GM12878 (cell line): ENCODE measurements at regions of chr3 and their contacts with region 1.

Region 1: GRCh38 chr3:179071550-179072397 is at the start of gene ZMAT3:
- DNase-seq: no peak
- ATAC-seq: peak; percentile 73
- H3K4me3 ChIP-seq: peak within 1 kb of the TSS; percentile 70
- H3K27ac ChIP-seq: peak within 1 kb of the TSS; percentile 92
- H3K4me1 ChIP-seq: peaks cover 23% of the 10 kb centered on the region
- H3K27me3 ChIP-seq: no peaks in the 10 kb centered on the region
- CTCF ChIP-seq: no peak
- EP300 ChIP-seq: no peak
- POLR2A ChIP-seq: peak; percentile 93
- RAD21 ChIP-seq: no peak
- polyA plus RNA-seq, gene ZMAT3: 6.2 to 10.4 TPM

Region 2: DNA sequence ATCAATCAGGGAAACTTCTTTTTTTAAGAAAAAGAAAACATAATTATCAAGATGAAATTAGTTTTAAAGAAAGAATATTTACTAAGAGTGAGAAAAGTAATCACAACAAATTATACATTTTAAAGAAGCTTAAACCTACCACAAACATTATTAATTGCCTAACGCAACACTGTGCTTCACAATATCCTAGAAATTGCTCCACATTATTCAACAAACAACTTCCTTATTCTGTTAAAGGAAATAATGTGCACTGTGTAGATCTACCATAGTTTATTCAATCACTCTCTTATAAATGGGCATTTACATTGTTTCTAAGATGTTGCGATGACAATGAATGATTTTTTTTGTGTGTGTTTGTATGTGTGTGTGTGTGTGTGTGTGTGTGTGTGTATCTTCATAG is 1061.5 kb before region 1 on chr3:
- CTCF ChIA-PET with region 1: no interaction called
- POLR2A ChIA-PET with region 1: no interaction called
- RAD21 ChIA-PET with region 1: no interaction called
- SMC1A ChIA-PET with region 1: no interaction called
- in situ Hi-C with region 1: no loop called
- intact Hi-C with region 1: no loop called
- DNase-seq: no peak
- ATAC-seq: no peak
- H3K4me3 ChIP-seq: no peak overlapping the region
- H3K27ac ChIP-seq: no peak overlapping the region
- H3K4me1 ChIP-seq: no peaks in the 10 kb centered on the region
- H3K27me3 ChIP-seq: no peaks in the 10 kb centered on the region
- CTCF ChIP-seq: no peak
- EP300 ChIP-seq: no peak
- POLR2A ChIP-seq: no peak
- RAD21 ChIP-seq: no peak

Region 3: GRCh38 chr3:178966299-178967176 is 105.2 kb before region 1 on chr3:
- CTCF ChIA-PET with region 1: interaction called, 15 read pairs
- POLR2A ChIA-PET with region 1: interaction called, 4 read pairs
- RAD21 ChIA-PET with region 1: interaction called, 5 read pairs
- SMC1A ChIA-PET with region 1: interaction called, 4 read pairs
- in situ Hi-C with region 1: no loop called
- intact Hi-C with region 1: no loop called
- DNase-seq: peak; percentile 32
- ATAC-seq: peak; percentile 26
- H3K4me3 ChIP-seq: peak overlapping the region; percentile 39; the same call in 1 of the 2 replicates
- H3K27ac ChIP-seq: peak overlapping the region; percentile 73
- H3K4me1 ChIP-seq: peaks cover 32% of the 10 kb centered on the region
- H3K27me3 ChIP-seq: no peaks in the 10 kb centered on the region
- CTCF ChIP-seq: peak; percentile 41 to 61 (median 45); a peak in 5 of 6 replicates
- EP300 ChIP-seq: no peak; a peak in 1 of 4 replicates
- POLR2A ChIP-seq: no peak
- RAD21 ChIP-seq: peak; percentile 91

Region 4: DNA sequence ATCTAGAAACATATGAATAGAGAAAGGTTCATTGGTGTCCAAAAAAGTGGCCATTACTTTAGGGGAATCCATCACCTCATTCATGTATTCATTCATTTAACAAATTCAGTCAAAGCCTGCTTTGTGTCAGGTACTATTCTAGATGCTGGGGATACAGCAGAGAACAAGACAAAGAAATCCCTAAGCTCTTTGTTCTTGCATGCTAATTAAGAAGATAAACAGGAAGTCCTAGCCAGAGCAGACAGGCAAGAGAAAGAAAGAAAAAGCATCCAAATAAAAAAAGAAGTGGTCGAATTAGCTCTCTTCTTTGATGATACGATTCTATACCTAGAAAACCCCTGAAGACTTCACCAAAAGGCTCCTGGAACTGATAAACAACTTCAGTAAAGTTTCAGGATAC is 12.2 kb after region 1 on chr3:
- CTCF ChIA-PET with region 1: interaction called, 31 read pairs
- POLR2A ChIA-PET with region 1: interaction called, 14 read pairs
- RAD21 ChIA-PET with region 1: interaction called, 10 read pairs
- SMC1A ChIA-PET with region 1: interaction called, 10 read pairs
- in situ Hi-C with region 1: no loop called
- intact Hi-C with region 1: no loop called
- DNase-seq: no peak
- ATAC-seq: peak; percentile 72
- H3K4me3 ChIP-seq: no peak overlapping the region
- H3K27ac ChIP-seq: peak overlapping the region; percentile 31; the same call in 1 of the 2 replicates
- H3K4me1 ChIP-seq: peaks cover 6% of the 10 kb centered on the region; the same call in 1 of the 2 replicates
- H3K27me3 ChIP-seq: no peaks in the 10 kb centered on the region
- CTCF ChIP-seq: no peak
- EP300 ChIP-seq: no peak
- POLR2A ChIP-seq: no peak
- RAD21 ChIP-seq: no peak

Region 5: DNA sequence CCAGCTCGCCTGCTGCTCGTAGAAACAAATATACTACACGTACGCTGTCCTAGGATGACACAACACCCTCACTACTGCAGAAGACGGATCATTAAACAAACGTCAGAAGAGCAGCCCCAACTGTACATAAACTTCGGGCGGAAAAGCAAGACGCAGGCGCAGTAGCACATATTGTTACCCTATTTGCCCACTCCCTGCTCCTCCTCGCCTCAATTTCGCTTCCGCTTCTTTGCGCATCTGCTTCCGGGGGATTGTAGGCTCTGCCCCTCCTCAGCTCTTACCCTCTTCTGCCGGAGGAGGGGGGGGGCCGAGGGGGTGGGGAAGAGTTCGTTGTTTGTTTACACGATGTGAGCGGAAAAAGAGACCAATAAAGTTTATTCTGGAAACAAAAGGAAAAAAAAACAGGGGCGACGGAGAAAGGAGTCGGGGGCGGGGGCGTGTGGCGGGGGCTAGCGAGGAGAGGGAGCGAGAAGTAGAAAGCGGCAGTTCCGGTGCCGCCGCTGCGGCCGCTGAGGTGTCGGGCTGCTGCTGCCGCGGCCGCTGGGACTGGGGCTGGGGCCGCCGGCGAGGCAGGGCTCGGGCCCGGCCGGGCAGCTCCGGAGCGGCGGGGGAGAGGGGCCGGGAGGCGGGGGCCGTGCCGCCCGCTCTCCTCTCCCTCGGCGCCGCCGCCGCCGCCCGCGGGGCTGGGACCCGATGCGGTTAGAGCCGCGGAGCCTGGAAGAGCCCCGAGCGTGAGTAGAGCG is 76.3 kb after region 1 on chr3 and contains the start of gene PIK3CA:
- CTCF ChIA-PET with region 1: interaction called, 31 read pairs
- POLR2A ChIA-PET with region 1: interaction called, 28 read pairs
- RAD21 ChIA-PET with region 1: interaction called, 38 read pairs
- SMC1A ChIA-PET with region 1: interaction called, 22 read pairs
- in situ Hi-C with region 1: no loop called
- intact Hi-C with region 1: loop called (anchors 2 kb)
- DNase-seq: peak; percentile 96
- ATAC-seq: peak; percentile 83
- H3K4me3 ChIP-seq: peak within 1 kb of the TSS; percentile 82
- H3K27ac ChIP-seq: peak within 1 kb of the TSS; percentile 88
- H3K4me1 ChIP-seq: peaks cover 5% of the 10 kb centered on the region; the same call in 1 of the 2 replicates
- H3K27me3 ChIP-seq: no peaks in the 10 kb centered on the region
- CTCF ChIP-seq: no peak
- EP300 ChIP-seq: peak in 1 of 2 experiments; percentile 2; a peak in 1 of 4 replicates
- POLR2A ChIP-seq: peak; percentile 76
- RAD21 ChIP-seq: no peak
- polyA plus RNA-seq, gene PIK3CA: 3.0 to 4.1 TPM

Region 6: DNA sequence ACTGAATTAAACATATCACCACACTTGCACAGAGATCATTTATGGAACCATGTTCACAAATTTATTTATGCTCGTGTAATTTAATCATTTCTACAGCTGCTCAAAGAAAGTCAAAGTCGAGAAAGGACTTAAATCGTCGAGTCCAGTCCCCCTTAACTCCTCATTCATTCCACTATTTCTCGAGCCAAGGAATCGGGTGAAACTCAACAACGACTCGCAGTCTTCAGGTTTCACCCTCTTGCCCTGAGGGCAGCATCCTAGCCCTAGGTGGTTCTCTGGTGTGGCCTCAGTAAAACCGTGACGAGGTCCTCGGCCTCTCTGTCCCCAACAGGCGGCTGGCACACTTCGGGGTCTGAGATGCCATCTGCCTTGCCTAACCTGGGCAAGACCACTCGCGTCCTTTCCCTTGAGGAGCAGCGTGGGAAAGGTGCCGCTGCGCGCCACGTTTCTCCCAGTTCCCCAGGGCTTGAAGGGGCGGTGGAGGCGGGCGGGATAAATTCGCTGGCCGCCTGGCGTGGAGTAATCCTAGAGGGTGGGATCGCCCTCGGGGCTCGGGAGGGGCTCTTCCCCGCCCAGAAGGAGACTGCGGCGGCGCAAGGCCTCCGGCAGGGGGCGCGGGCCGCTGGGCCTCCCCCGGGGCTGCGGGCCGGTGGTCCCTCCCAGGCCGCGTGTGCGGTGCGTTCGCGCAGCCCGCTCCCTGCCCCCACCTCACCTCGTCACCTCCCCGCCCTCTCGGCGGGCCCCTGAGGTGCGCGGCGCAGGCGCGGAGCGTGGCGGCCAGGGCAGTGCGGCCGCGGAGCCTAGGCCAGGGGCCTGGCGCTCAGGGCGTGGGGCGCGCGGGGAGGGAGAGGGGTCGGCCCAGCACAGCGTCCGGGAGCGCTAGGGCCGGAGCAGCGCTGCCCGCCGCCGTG is 250.8 kb after region 1 on chr3 and contains the start of gene ZNF639:
- CTCF ChIA-PET with region 1: interaction called, 114 read pairs
- POLR2A ChIA-PET with region 1: interaction called, 7 read pairs
- RAD21 ChIA-PET with region 1: interaction called, 30 read pairs
- SMC1A ChIA-PET with region 1: interaction called, 47 read pairs
- in situ Hi-C with region 1: no loop called
- intact Hi-C with region 1: loop called (anchors 2 kb)
- DNase-seq: no peak
- ATAC-seq: peak; percentile 84
- H3K4me3 ChIP-seq: peak within 1 kb of the TSS; percentile 78
- H3K27ac ChIP-seq: peak within 1 kb of the TSS; percentile 94
- H3K4me1 ChIP-seq: peaks cover 8% of the 10 kb centered on the region
- H3K27me3 ChIP-seq: no peaks in the 10 kb centered on the region
- CTCF ChIP-seq: peak; percentile 71 to 84 (median 82)
- EP300 ChIP-seq: no peak
- POLR2A ChIP-seq: peak; percentile 81
- RAD21 ChIP-seq: peak; percentile 47
- polyA plus RNA-seq, gene ZNF639: 16.3 to 17.7 TPM